CD8-positive, alpha-beta T cell (primary cell): ENCODE measurements at regions of chr14 and their contacts with region 1.

Region 1: DNA sequence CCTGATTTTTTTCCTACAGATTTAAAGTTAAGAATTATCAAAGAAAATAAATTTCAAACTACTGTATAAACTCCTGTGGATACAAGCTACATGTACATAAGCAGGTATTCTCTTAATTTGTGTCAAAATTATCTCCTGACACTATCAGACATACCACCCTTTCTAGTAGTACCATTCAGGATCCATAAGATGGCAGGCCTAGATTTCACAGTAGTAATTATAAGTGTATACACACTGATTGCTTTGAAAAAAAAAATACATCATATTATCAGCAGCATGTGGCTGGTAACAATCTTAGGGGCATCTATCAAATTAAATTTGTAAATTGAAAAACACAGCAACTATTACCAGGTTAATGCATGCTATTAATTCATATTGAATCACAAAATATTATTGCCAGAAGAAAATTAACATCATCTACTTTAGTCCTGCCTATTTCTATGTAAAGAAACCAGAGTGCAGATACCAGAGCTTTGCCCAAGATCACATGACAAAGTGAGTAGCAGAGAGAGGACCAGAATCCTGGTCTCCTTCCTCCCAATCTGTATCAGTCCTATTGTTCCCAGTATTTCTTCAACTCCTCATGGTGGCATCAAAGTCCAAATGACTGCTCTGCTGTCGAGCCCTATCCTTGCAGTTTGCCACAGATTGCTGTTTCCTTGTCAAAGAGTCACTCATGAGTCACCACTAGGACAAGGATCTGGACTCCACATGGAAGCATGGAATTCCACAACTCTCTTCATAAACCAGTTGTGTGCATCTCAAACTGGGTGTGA is 27.7 kb upstream of the CALM1 start:
- DNase-seq: peak in 2 of 9 experiments; percentile 57 to 71
- ATAC-seq: peak; percentile 98
- H3K4me3 ChIP-seq: no peak overlapping the region
- H3K4me3 Mint-ChIP-seq: no peak overlapping the region
- H3K27ac ChIP-seq: no peak overlapping the region
- H3K27ac Mint-ChIP-seq: no peak overlapping the region
- H3K4me1 ChIP-seq: no peaks in the 10 kb centered on the region
- H3K4me1 Mint-ChIP-seq: no peaks in the 10 kb centered on the region
- H3K27me3 ChIP-seq: peaks cover 0 to 3% of the 10 kb centered on the region in 2 experiments
- H3K27me3 Mint-ChIP-seq: no peaks in the 10 kb centered on the region
- CTCF ChIP-seq: peak; percentile 80

Region 2: DNA sequence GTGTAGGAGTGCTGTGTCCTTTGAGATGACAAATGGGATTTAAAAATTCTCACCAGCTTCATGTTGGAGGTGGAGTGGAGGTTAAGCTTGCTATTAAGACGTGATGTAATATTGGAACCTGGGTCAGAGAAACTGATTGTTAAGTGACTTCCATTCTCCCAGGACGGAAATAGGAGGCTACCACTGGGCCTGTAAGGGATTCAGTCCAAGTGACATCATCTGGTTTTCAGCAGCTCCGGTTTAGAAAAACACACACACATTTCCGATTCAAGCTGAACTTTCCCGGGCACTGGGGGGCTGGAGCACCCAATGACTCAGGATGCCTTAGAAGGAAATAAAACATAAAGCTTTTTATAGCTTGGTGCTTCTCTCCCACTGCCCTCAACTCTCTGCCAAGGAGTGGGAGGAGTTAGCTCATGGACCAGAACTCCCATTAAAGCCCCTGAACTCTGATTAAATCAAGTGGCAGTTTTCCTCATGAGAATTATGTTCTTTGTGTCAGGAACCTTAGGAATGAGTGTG is 40.1 kb after region 1 on chr14:
- CTCF ChIA-PET with region 1: interaction called, 11 read pairs
- POLR2A ChIA-PET with region 1: no interaction called
- intact Hi-C with region 1: no loop called
- DNase-seq: no peak
- ATAC-seq: no peak
- H3K4me3 ChIP-seq: no peak overlapping the region
- H3K4me3 Mint-ChIP-seq: no peak overlapping the region
- H3K27ac ChIP-seq: peak overlapping the region in 1 of 2 experiments; percentile 40
- H3K27ac Mint-ChIP-seq: peak overlapping the region; percentile 77
- H3K4me1 ChIP-seq: no peaks in the 10 kb centered on the region
- H3K4me1 Mint-ChIP-seq: peaks cover 33% of the 10 kb centered on the region
- H3K27me3 ChIP-seq: no peaks in the 10 kb centered on the region
- H3K27me3 Mint-ChIP-seq: no peaks in the 10 kb centered on the region
- CTCF ChIP-seq: no peak

Region 3: GRCh38 chr14:90518941-90519256 is 149.8 kb after region 1 on chr14:
- CTCF ChIA-PET with region 1: interaction called, 12 read pairs
- POLR2A ChIA-PET with region 1: no interaction called
- intact Hi-C with region 1: loop called in 1 of 2 experiments (anchors 2 kb)
- DNase-seq: peak in 8 of 9 experiments; percentile 29 to 69 (median 58)
- ATAC-seq: peak; percentile 62
- H3K4me3 ChIP-seq: no peak overlapping the region
- H3K4me3 Mint-ChIP-seq: no peak overlapping the region
- H3K27ac ChIP-seq: no peak overlapping the region
- H3K27ac Mint-ChIP-seq: no peak overlapping the region
- H3K4me1 ChIP-seq: no peaks in the 10 kb centered on the region
- H3K4me1 Mint-ChIP-seq: no peaks in the 10 kb centered on the region
- H3K27me3 ChIP-seq: no peaks in the 10 kb centered on the region
- H3K27me3 Mint-ChIP-seq: peaks cover 2% of the 10 kb centered on the region
- CTCF ChIP-seq: peak; percentile 51

Region 4: GRCh38 chr14:90559811-90560492 is 190.8 kb after region 1 on chr14:
- CTCF ChIA-PET with region 1: no interaction called
- POLR2A ChIA-PET with region 1: no interaction called
- intact Hi-C with region 1: no loop called
- DNase-seq: no peak
- ATAC-seq: no peak
- H3K4me3 ChIP-seq: no peak overlapping the region
- H3K4me3 Mint-ChIP-seq: no peak overlapping the region
- H3K27ac ChIP-seq: no peak overlapping the region
- H3K27ac Mint-ChIP-seq: no peak overlapping the region
- H3K4me1 ChIP-seq: no peaks in the 10 kb centered on the region
- H3K4me1 Mint-ChIP-seq: no peaks in the 10 kb centered on the region
- H3K27me3 ChIP-seq: no peaks in the 10 kb centered on the region
- H3K27me3 Mint-ChIP-seq: no peaks in the 10 kb centered on the region
- CTCF ChIP-seq: no peak

Region 5: GRCh38 chr14:90599748-90600507 is 230.8 kb after region 1 on chr14:
- CTCF ChIA-PET with region 1: no interaction called
- POLR2A ChIA-PET with region 1: no interaction called
- intact Hi-C with region 1: loop called in 1 of 2 experiments (anchors 5 kb)
- DNase-seq: peak in 1 of 9 experiments; percentile 20
- ATAC-seq: no peak
- H3K4me3 ChIP-seq: no peak overlapping the region
- H3K4me3 Mint-ChIP-seq: no peak overlapping the region
- H3K27ac ChIP-seq: no peak overlapping the region
- H3K27ac Mint-ChIP-seq: no peak overlapping the region
- H3K4me1 ChIP-seq: no peaks in the 10 kb centered on the region
- H3K4me1 Mint-ChIP-seq: no peaks in the 10 kb centered on the region
- H3K27me3 ChIP-seq: no peaks in the 10 kb centered on the region
- H3K27me3 Mint-ChIP-seq: peaks cover 4% of the 10 kb centered on the region
- CTCF ChIP-seq: no peak